ENCODE measurements at regions of chr9 and their contacts with region 1.

Region 1: GRCh38 chr9:131277910-131278701 is 1.8 kb upstream of the FAM78A start:
- DNase-seq: peak; percentile 90
- ATAC-seq: peak; percentile 66

Region 2: GRCh38 chr9:131237931-131238401 is 40.1 kb before region 1 on chr9:
- intact Hi-C with region 1: loop called (anchors 2 kb)
- DNase-seq: peak; percentile 91
- ATAC-seq: peak; percentile 53

Measured in Right ventricle myocardium inferior (tissue), 1 donor.